CD8-positive, alpha-beta T cell (primary cell): ENCODE measurements at regions of chr7 and their contacts with region 1.

Region 1: GRCh38 chr7:111763221-111763801 is 201.0 kb upstream of the IMMP2L start:
- DNase-seq: peak in 1 of 9 experiments; percentile 13
- ATAC-seq: no peak
- H3K4me3 ChIP-seq: no peak overlapping the region
- H3K4me3 Mint-ChIP-seq: no peak overlapping the region
- H3K27ac ChIP-seq: no peak overlapping the region
- H3K27ac Mint-ChIP-seq: no peak overlapping the region
- H3K4me1 ChIP-seq: no peaks in the 10 kb centered on the region
- H3K4me1 Mint-ChIP-seq: no peaks in the 10 kb centered on the region
- H3K27me3 ChIP-seq: no peaks in the 10 kb centered on the region
- H3K27me3 Mint-ChIP-seq: no peaks in the 10 kb centered on the region
- CTCF ChIP-seq: peak; percentile 24

Region 2: DNA sequence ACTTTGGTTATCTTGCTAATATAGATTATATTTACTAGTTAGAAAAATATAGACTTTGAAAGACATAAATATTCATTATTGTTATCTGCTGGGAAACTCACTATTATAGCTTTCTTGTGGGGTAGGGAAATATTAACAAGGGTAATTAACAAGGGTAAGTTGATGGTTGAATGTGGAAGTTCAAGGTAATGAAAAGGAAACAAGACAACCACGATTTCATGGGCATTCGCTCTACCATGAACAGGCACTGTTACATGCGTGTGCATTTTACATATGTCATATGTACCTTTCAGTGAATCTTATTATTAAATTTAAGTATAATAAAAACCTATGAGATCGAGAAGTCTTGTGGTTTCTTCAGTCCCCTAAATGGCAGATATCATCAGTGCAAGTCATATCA is 50.0 kb after region 1 on chr7:
- CTCF ChIA-PET with region 1: no interaction called
- POLR2A ChIA-PET with region 1: no interaction called
- intact Hi-C with region 1: no loop called
- DNase-seq: no peak
- ATAC-seq: no peak
- H3K4me3 ChIP-seq: no peak overlapping the region
- H3K4me3 Mint-ChIP-seq: no peak overlapping the region
- H3K27ac ChIP-seq: no peak overlapping the region
- H3K27ac Mint-ChIP-seq: no peak overlapping the region
- H3K4me1 ChIP-seq: no peaks in the 10 kb centered on the region
- H3K4me1 Mint-ChIP-seq: no peaks in the 10 kb centered on the region
- H3K27me3 ChIP-seq: no peaks in the 10 kb centered on the region
- H3K27me3 Mint-ChIP-seq: no peaks in the 10 kb centered on the region
- CTCF ChIP-seq: no peak

Region 3: GRCh38 chr7:112414855-112415490 is 651.7 kb after region 1 on chr7:
- CTCF ChIA-PET with region 1: no interaction called
- POLR2A ChIA-PET with region 1: no interaction called
- intact Hi-C with region 1: loop called in 1 of 2 experiments (anchors 5 kb)
- DNase-seq: peak in 2 of 9 experiments; percentile 22 to 39
- ATAC-seq: no peak
- H3K4me3 ChIP-seq: no peak overlapping the region
- H3K4me3 Mint-ChIP-seq: no peak overlapping the region
- H3K27ac ChIP-seq: no peak overlapping the region
- H3K27ac Mint-ChIP-seq: no peak overlapping the region
- H3K4me1 ChIP-seq: no peaks in the 10 kb centered on the region
- H3K4me1 Mint-ChIP-seq: no peaks in the 10 kb centered on the region
- H3K27me3 ChIP-seq: no peaks in the 10 kb centered on the region
- H3K27me3 Mint-ChIP-seq: peaks cover 4% of the 10 kb centered on the region
- CTCF ChIP-seq: no peak